GM10248 (cell line): ENCODE measurements at regions of chr1 and their contacts with region 1.

Region 1: DNA sequence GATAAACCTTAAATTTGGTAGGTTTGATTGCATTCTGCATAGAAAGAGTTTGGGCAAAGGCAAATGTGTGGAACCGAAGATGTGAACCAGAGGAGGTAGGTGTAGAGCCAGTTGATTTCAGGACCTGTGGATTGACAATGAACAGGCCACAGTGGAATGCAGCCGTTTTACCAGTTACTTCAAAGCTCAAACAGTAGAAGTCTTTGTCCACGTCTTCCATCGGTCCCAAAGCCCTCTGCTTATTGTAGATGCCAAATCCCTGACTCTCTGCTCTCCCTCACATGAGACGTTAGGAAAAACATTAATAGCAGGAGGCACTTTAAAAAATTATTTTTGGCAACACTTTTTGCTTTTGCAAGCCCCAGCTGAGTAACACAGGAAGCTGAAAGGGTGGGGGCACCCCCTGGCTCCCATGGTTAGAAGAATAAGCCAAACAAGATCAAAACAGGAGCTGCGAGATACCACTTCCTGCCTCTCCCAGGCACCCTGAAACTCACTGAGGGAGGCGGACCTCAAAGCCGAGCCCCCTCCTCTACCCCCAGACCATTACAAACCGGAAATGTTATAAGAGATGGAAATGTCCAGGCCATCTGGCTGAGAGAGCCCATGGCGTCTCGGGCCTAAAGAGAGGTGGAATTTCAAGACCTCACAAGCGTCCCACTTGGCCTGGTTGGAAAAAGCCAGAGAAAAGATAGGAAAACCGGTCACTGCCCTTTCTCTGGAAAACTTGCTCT is 13.5 kb downstream of the TRAF3IP3 start:
- DNase-seq: peak; percentile 74
- CTCF ChIP-seq: no peak

Region 2: GRCh38 chr1:209497729-209498128 is 271.6 kb before region 1 on chr1:
- CTCF ChIA-PET with region 1: no interaction called
- POLR2A ChIA-PET with region 1: no interaction called
- DNase-seq: no peak
- CTCF ChIP-seq: no peak

Region 3: GRCh38 chr1:209755926-209756614 is 13.3 kb before region 1 on chr1 and contains the start of gene TRAF3IP3:
- CTCF ChIA-PET with region 1: interaction called, 40 read pairs
- POLR2A ChIA-PET with region 1: interaction called, 3 read pairs
- DNase-seq: peak; percentile 76
- CTCF ChIP-seq: no peak

Region 4: GRCh38 chr1:209784265-209785169 is 15.2 kb after region 1 on chr1 and contains the start of gene C1orf74:
- CTCF ChIA-PET with region 1: interaction called, 11 read pairs
- POLR2A ChIA-PET with region 1: interaction called, 5 read pairs
- DNase-seq: peak; percentile 98
- CTCF ChIP-seq: peak; percentile 9

Region 5: DNA sequence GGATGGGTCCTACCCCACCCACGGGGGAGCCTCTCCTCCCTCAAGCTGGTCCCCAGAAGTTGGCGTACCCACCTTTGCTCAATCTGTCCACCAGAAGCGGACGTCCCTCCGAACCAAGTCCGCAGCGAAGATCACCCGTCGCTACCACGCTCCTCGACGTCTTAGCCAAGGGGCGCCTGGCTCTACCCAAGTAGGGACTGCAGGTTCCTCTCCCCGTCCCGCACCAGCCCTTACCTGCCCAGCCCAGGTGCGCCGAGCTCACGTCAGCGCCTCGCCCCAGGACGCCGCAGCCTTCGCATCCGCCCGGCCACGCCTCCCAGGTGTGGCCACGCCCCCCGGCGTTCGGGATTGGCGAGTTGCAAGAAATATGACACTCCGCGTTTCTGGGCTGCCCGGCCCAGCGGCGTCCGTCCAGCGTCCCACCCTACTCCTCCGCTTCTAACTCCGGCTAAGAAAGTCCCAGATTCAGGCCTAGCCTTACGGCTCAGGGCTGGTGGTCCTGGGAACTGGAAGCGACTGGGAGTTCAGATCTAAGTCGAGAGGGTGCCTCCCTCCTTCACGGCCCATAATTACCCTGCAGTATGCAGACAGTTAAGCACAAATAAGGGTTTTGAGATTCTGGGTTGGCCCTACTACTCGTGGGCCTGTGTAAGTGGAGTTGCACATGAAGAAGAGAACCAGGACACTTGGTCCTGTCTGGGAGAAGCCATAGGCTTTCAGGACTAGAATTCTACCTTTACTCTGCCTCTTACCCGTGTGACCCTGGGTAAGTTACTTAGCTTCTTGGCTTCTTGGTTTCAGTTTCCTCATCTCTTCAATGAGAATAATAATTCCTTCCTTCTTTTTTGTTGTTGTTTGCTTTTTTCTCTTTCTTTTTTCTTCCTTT is 36.8 kb after region 1 on chr1 and contains the start of gene IRF6:
- CTCF ChIA-PET with region 1: no interaction called
- POLR2A ChIA-PET with region 1: no interaction called
- DNase-seq: peak; percentile 86
- CTCF ChIP-seq: no peak

Region 6: DNA sequence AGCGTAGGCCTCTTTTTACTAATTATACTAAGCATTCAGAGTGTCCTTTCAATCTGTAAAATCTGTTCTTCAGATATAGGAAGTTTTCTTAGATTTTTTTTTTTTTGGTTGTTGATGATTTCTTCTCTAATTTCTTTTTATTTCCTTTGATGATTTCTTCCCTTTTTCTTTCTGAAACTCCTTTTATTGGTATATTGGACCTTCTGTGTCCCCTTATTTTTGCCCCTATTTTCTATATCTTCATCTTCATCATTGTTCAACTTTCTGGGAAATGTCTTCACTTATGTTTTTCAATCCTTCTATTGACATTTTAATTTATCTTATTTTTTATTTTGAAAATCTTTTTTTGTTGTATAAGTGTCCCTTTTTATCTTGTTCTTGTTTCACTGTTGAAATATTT is 151.5 kb after region 1 on chr1:
- CTCF ChIA-PET with region 1: no interaction called
- POLR2A ChIA-PET with region 1: no interaction called
- DNase-seq: no peak
- CTCF ChIP-seq: no peak

Region 7: GRCh38 chr1:210087058-210087457 is 317.7 kb after region 1 on chr1:
- CTCF ChIA-PET with region 1: no interaction called
- POLR2A ChIA-PET with region 1: no interaction called
- DNase-seq: no peak
- CTCF ChIP-seq: no peak